ENCODE measurements at regions of chr3 and their contacts with region 1.

Region 1: DNA sequence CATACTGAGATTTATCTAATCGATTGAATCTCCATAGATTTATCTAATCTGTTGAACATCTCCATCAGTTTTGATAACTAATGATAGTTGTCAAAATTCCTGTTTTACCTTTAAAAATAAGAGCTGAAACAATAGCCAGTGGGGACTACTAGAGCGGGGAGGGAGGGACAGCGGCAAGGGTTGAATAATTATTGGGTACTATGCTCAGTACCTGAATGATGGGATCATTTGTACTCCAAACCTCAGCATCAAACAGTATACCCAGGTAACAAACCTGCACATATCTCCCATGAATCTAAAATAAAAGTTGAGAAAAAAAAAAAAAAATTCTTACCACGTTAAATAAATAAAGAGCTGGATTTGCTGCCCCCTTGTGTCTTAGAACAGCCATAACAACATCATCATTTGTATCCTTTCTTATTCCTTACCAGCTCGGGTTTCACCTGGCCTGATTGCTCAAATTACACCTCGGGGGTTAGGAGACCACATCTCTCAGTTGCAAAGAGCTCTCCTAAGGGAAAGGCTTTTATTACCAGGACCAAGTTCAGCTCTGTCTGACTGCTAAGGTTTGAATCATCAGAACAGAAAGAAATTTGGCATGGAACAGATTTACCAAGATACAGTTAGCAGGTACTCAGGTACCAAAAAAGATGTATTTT is 25.7 kb upstream of the RPL39L start:
- DNase-seq: peak; percentile 71 to 91
- H3K4me3 ChIP-seq: no peak overlapping the region
- H3K27ac ChIP-seq: no peak overlapping the region
- H3K4me1 ChIP-seq: peaks cover 23% of the 10 kb centered on the region
- H3K27me3 ChIP-seq: no peaks in the 10 kb centered on the region
- CTCF ChIP-seq: peak; percentile 94

Region 2: DNA sequence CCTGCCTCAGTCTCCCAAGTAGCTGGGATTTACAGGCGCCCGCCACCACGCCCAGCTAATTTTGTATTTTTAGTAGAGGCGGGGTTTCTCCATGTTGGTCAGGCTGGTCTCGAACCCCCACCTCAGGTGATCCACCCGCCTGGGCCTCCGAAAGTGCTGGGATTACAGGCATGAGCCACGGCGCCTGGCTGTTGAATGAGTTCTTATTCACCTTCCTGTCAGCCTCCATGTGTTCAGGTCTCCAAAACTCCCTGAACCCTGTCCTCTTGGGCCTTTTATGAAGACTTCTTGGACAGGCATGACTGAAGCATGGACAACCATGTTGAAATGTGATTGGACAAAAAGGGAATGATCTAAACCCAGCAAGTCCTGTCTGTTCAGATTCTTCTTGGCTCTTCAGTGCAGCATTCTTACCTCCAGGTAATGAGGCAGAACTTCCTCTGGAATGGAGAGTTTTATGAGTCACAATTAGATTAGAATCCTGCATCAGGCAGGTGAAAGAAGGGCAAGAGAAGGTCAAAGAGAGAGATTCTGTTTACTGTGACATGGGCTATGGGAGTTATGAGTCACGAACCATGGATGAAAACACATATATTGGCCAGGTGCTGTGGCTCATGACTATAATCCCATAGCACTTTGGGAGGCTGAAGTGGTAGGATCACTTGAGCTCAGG is 404.7 kb before region 1 on chr3:
- CTCF ChIA-PET with region 1: no interaction called
- POLR2A ChIA-PET with region 1: interaction called, 12 read pairs
- intact Hi-C with region 1: no loop called
- DNase-seq: peak; percentile 65 to 100
- H3K4me3 ChIP-seq: no peak overlapping the region
- H3K27ac ChIP-seq: peak overlapping the region; percentile 71
- H3K4me1 ChIP-seq: peaks cover 21% of the 10 kb centered on the region
- H3K27me3 ChIP-seq: no peaks in the 10 kb centered on the region
- CTCF ChIP-seq: no peak

Region 3: GRCh38 chr3:186815435-186815834 is 349.6 kb before region 1 on chr3:
- CTCF ChIA-PET with region 1: no interaction called
- POLR2A ChIA-PET with region 1: no interaction called
- intact Hi-C with region 1: no loop called
- DNase-seq: peak in 1 of 2 experiments; percentile 70
- H3K4me3 ChIP-seq: no peak overlapping the region
- H3K27ac ChIP-seq: no peak overlapping the region
- H3K4me1 ChIP-seq: peaks cover 10% of the 10 kb centered on the region
- H3K27me3 ChIP-seq: no peaks in the 10 kb centered on the region
- CTCF ChIP-seq: no peak

Region 4: GRCh38 chr3:186930641-186931531 is 234.1 kb before region 1 on chr3:
- CTCF ChIA-PET with region 1: no interaction called
- POLR2A ChIA-PET with region 1: no interaction called
- intact Hi-C with region 1: loop called (anchors 10 kb)
- DNase-seq: peak; percentile 65 to 71
- H3K4me3 ChIP-seq: peak overlapping the region; percentile 97
- H3K27ac ChIP-seq: no peak overlapping the region
- H3K4me1 ChIP-seq: peaks cover 12% of the 10 kb centered on the region
- H3K27me3 ChIP-seq: no peaks in the 10 kb centered on the region
- CTCF ChIP-seq: peak; percentile 29; the same call in 1 of the 2 replicates

Region 5: GRCh38 chr3:187044206-187044605 is 120.8 kb before region 1 on chr3:
- CTCF ChIA-PET with region 1: no interaction called
- POLR2A ChIA-PET with region 1: no interaction called
- intact Hi-C with region 1: no loop called
- DNase-seq: no peak
- H3K4me3 ChIP-seq: no peak overlapping the region
- H3K27ac ChIP-seq: no peak overlapping the region
- H3K4me1 ChIP-seq: no peaks in the 10 kb centered on the region
- H3K27me3 ChIP-seq: no peaks in the 10 kb centered on the region
- CTCF ChIP-seq: no peak

Region 6: GRCh38 chr3:187112934-187113793 is 51.9 kb before region 1 on chr3:
- CTCF ChIA-PET with region 1: interaction called, 22 read pairs
- POLR2A ChIA-PET with region 1: interaction called, 10 read pairs
- intact Hi-C with region 1: no loop called
- DNase-seq: no peak
- H3K4me3 ChIP-seq: no peak overlapping the region
- H3K27ac ChIP-seq: no peak overlapping the region
- H3K4me1 ChIP-seq: no peaks in the 10 kb centered on the region
- H3K27me3 ChIP-seq: no peaks in the 10 kb centered on the region
- CTCF ChIP-seq: peak; percentile 88

Region 7: DNA sequence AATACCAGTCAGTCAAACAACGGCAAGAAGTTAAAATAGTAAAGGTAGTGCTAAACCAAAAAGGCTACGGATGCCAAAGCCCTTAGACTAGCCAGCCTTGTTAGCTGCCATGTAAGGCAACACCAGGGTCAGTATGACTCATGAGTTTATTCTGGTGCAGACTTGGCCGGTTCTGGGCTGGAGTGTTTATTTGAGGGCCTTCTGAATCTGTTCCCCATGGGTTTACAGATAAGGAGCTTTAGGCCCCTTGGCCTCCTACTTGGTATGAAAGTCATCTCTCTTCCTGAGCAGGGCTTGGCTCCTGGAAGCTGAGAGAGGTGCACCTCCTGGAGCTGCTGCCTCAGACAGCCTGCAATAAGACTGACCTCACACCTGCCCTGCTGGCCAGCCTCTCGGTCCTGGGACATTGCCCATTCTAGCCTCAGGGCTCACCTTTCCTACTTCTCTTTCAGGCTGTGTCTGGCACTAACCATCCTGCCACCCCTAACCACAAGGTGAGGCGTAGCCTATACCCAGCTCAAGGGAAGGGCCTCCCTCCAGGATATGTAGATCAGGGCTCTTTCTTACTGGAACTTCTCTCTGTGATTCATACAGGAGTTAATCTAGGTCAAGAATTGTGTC is 21.9 kb after region 1 on chr3:
- CTCF ChIA-PET with region 1: interaction called, 23 read pairs
- POLR2A ChIA-PET with region 1: interaction called, 17 read pairs
- intact Hi-C with region 1: loop called (anchors 1 kb)
- DNase-seq: peak; percentile 98 to 100
- H3K4me3 ChIP-seq: peak overlapping the region; percentile 16; the same call in 1 of the 2 replicates
- H3K27ac ChIP-seq: peak overlapping the region; percentile 83
- H3K4me1 ChIP-seq: peaks cover 60% of the 10 kb centered on the region
- H3K27me3 ChIP-seq: no peaks in the 10 kb centered on the region
- CTCF ChIP-seq: 0 out of 2 replicates have a peak, but pooled peaks have one; percentile 11

Region 8: GRCh38 chr3:187227658-187228258 is 62.7 kb after region 1 on chr3:
- CTCF ChIA-PET with region 1: interaction called, 14 read pairs
- POLR2A ChIA-PET with region 1: no interaction called
- intact Hi-C with region 1: no loop called
- DNase-seq: peak; percentile 58 to 78
- H3K4me3 ChIP-seq: no peak overlapping the region
- H3K27ac ChIP-seq: no peak overlapping the region
- H3K4me1 ChIP-seq: peaks cover 24% of the 10 kb centered on the region
- H3K27me3 ChIP-seq: peaks cover 34% of the 10 kb centered on the region
- CTCF ChIP-seq: no peak

Region 9: GRCh38 chr3:187679638-187680396 is 514.8 kb after region 1 on chr3:
- CTCF ChIA-PET with region 1: interaction called, 18 read pairs
- POLR2A ChIA-PET with region 1: no interaction called
- intact Hi-C with region 1: no loop called
- DNase-seq: peak; percentile 71 to 79
- H3K4me3 ChIP-seq: no peak overlapping the region
- H3K27ac ChIP-seq: no peak overlapping the region
- H3K4me1 ChIP-seq: no peaks in the 10 kb centered on the region
- H3K27me3 ChIP-seq: peaks cover 47% of the 10 kb centered on the region
- CTCF ChIP-seq: peak; percentile 96